ENCODE measurements at regions of chr12 and their contacts with region 1.

Region 1: DNA sequence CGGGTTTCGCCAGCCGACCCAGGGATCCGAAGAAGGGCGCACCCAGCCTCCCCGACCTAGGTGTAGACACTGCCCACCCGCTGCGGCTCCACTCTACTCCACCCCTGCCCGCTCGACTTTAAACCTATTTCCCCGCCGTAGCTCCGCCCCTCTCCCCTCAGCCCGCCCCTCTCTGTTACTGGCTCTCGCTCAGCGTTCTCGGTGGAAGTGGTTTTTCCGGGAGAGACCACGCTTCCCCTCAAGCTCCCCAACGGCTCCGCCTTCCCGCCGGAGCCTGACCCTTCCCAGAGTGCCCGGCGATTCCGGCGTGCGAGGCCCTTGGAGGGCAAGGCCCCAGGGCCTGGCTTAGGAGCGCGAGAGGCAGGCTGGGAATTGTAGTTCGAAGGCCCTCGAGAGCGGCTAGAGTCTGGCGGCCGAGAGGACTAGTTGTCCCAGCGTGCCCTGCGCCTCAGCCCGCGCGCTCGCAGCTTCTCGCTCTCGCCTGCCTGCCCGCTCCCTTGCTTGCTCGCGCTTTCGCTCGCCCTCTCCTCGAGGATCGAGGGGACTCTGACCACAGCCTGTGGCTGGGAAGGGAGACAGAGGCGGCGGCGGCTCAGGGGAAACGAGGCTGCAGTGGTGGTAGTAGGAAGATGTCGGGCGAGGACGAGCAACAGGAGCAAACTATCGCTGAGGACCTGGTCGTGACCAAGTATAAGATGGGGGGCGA is at the start of gene PA2G4:
- DNase-seq: peak; percentile 99
- H3K4me3 ChIP-seq: peak within 1 kb of the TSS; percentile 67 to 91 (median 72)
- H3K27ac ChIP-seq: peak within 1 kb of the TSS; percentile 87 to 90 (median 88)
- H3K4me1 ChIP-seq: peaks cover 16 to 33% (median 28%) of the 10 kb centered on the region in 4 donors
- H3K27me3 ChIP-seq: no peaks in the 10 kb centered on the region
- CTCF ChIP-seq: peak in 1 of 3 experiments; percentile 26
- EP300 ChIP-seq: peak; percentile 52
- POLR2A ChIP-seq: peak; percentile 78
- total RNA-seq, gene PA2G4: 90.5 to 133 (median 105) TPM

Region 2: GRCh38 chr12:55996715-55997534 is 107.3 kb before region 1 on chr12 and contains the start of gene SUOX:
- intact Hi-C with region 1: loop called (anchors 5 kb)
- DNase-seq: peak; percentile 99
- H3K4me3 ChIP-seq: peak within 1 kb of the TSS; percentile 65 to 73 (median 68)
- H3K27ac ChIP-seq: peak within 1 kb of the TSS; percentile 81 to 90 (median 81)
- H3K4me1 ChIP-seq: peaks cover 9 to 26% (median 19%) of the 10 kb centered on the region in 4 donors
- H3K27me3 ChIP-seq: no peaks in the 10 kb centered on the region
- CTCF ChIP-seq: no peak
- EP300 ChIP-seq: no peak
- POLR2A ChIP-seq: no peak
- total RNA-seq, gene SUOX: 18.3 to 29.0 (median 25.3) TPM

Region 3: GRCh38 chr12:56041552-56042429 is 62.5 kb before region 1 on chr12 and contains the start of gene RPS26:
- intact Hi-C with region 1: loop called (anchors 5 kb)
- DNase-seq: peak; percentile 99
- H3K4me3 ChIP-seq: peak within 1 kb of the TSS; percentile 69 to 87 (median 82)
- H3K27ac ChIP-seq: peak within 1 kb of the TSS; percentile 86 to 96 (median 89)
- H3K4me1 ChIP-seq: peaks cover 15 to 24% (median 20%) of the 10 kb centered on the region in 4 donors
- H3K27me3 ChIP-seq: no peaks in the 10 kb centered on the region
- CTCF ChIP-seq: peak; percentile 13 to 55 (median 54)
- EP300 ChIP-seq: no peak
- POLR2A ChIP-seq: peak; percentile 93
- total RNA-seq, gene RPS26: 104 to 1,982 (median 577) TPM

Region 4: GRCh38 chr12:56079665-56080555 is 24.4 kb before region 1 on chr12 and contains the start of gene ERBB3:
- intact Hi-C with region 1: loop called (anchors 2 kb)
- DNase-seq: no peak
- H3K4me3 ChIP-seq: peak within 1 kb of the TSS; percentile 59 to 66 (median 60)
- H3K27ac ChIP-seq: peak within 1 kb of the TSS; percentile 68 to 78 (median 74)
- H3K4me1 ChIP-seq: peaks cover 7 to 23% (median 20%) of the 10 kb centered on the region in 4 donors
- H3K27me3 ChIP-seq: peaks cover 0 to 32% (median 12%) of the 10 kb centered on the region in 4 donors
- CTCF ChIP-seq: peak in 1 of 3 experiments; percentile 10
- EP300 ChIP-seq: no peak
- POLR2A ChIP-seq: no peak
- total RNA-seq, gene ERBB3: 13.9 to 25.0 (median 19.0) TPM

Region 5: DNA sequence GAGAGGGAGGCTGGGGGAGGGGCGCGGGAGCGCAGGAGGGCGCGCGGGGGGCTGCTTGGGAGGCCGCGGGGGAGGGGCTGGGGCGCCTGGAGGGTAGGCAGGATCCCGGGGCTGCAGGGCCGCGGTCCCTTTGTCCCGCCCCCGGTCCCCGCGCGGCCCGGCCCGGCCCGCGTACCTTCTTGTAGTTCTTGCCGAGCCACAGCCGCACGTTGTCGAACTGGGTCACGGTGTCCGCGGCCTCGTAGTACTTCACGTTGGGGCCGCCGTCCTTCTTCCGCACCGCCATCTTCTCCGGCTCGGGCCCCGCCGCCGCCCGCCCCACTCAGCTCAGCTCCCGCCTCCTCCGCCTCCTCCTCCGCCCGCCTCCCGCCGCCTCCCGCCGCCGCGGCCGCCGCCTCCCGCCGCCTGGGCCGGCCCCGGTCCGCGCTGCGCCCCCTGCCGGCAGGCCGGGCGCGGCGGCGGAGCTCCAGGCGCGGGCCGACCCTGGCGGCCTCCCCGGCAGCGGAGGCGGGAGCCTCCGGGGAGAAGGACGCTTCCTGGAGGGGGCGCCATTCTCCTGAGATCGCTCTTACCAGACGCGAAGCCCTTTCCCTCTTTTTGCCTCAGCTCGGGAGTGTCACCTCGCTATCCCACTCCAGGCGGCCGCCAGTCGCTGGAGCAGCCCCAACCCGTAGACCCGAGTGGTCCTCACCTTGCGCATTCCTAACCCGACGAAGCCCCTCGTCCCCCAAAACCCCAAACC is 85.1 kb after region 1 on chr12 and contains the start of gene SMARCC2:
- intact Hi-C with region 1: no loop called
- DNase-seq: peak; percentile 96
- H3K4me3 ChIP-seq: peak within 1 kb of the TSS; percentile 77 to 95 (median 88)
- H3K27ac ChIP-seq: peak within 1 kb of the TSS; percentile 95 to 97 (median 96)
- H3K4me1 ChIP-seq: peaks cover 20 to 40% (median 34%) of the 10 kb centered on the region in 4 donors
- H3K27me3 ChIP-seq: no peaks in the 10 kb centered on the region
- CTCF ChIP-seq: peak; percentile 70 to 81 (median 71)
- EP300 ChIP-seq: no peak
- POLR2A ChIP-seq: no peak
- total RNA-seq, gene SMARCC2: 62.1 to 111 (median 94.3) TPM

Measured in esophagus muscularis mucosa (tissue), 4 donors.